ENCODE measurements at regions of chr1 and their contacts with region 1.

Region 1: GRCh38 chr1:111952220-111952619 is 37.2 kb downstream of the KCND3 start:
- DNase-seq: no peak
- ATAC-seq: peak in 3 of 4 donors; percentile 39 to 65 (median 60)
- H3K4me3 ChIP-seq: no peak overlapping the region
- H3K27ac ChIP-seq: peak overlapping the region; percentile 60
- H3K4me1 ChIP-seq: peaks cover 56% of the 10 kb centered on the region
- H3K27me3 ChIP-seq: no peaks in the 10 kb centered on the region
- CTCF ChIP-seq: no peak

Region 2: DNA sequence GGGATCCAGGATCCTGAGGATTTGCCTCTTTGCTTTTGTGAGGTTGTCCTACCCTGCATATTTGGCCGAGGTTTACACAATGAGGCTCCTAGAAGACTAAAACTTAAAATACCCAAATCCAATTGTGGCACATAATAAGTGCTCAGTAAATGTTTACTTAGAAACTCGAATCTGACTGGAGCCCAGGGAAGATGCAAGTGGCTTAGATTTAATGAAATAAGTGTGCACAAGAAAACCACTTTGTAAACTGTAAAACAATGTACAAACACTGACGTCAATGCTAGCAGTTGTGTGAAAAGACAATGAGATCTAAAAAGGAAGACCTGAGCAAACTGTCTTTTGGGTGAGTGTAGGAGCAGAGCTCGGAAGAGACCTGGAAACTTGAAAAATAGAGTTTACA is 34.3 kb before region 1 on chr1:
- intact Hi-C with region 1: loop called in 1 of 2 experiments (anchors 5 kb)
- DNase-seq: no peak
- ATAC-seq: no peak
- H3K4me3 ChIP-seq: no peak overlapping the region
- H3K27ac ChIP-seq: no peak overlapping the region
- H3K4me1 ChIP-seq: peaks cover 21% of the 10 kb centered on the region
- H3K27me3 ChIP-seq: no peaks in the 10 kb centered on the region
- CTCF ChIP-seq: no peak

Measured in psoas muscle (tissue), 8 donors.